OCI-LY7 (cell line): ENCODE measurements at regions of chr2 and their contacts with region 1.

Region 1: GRCh38 chr2:119641562-119642258 is 37.3 kb upstream of the TMEM177 start:
- DNase-seq: peak; percentile 81
- H3K4me3 ChIP-seq: no peak overlapping the region
- H3K27ac ChIP-seq: no peak overlapping the region
- H3K4me1 ChIP-seq: peaks cover 4% of the 10 kb centered on the region
- CTCF ChIP-seq: peak; percentile 96

Region 2: DNA sequence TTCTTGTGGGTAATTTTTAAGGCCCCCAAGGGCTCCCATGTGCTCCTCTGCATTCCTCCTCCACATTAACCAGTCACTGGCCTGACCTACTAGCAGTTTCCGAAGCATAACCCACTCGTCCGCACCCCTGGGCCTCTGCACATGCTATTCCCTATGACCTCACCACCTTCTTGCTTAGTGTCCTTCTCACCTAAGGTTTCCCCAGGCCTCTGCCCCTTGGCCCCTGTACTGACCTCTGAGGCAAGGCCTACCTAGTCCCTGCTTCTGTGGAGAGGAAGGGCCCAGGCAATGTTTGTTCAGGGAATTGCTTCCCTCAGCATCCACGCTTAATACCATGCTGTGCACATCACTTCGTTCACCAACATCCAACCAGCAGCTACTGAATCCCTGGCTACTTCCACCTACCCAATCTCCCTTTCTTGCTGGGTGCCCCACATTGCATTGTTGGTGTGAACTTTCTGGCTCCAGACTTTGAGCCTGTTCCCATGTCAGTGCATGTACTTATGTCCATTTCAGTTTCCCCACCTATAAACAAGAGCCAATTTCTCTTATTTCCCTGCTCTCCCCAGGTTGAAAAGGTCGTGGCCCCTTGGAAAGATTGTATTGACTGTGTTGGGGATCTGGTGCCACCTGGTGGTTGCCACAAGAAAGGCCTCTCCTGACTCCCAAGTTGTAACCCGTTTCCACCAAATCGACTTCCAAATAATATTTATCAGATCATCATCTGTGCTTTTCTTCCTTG is 18.1 kb after region 1 on chr2:
- CTCF ChIA-PET with region 1: interaction called, 3 read pairs
- POLR2A ChIA-PET with region 1: interaction called, 4 read pairs
- intact Hi-C with region 1: loop called (anchors 1 kb)
- DNase-seq: peak; percentile 53
- H3K4me3 ChIP-seq: no peak overlapping the region
- H3K27ac ChIP-seq: no peak overlapping the region
- H3K4me1 ChIP-seq: no peaks in the 10 kb centered on the region
- CTCF ChIP-seq: peak; percentile 95

Region 3: GRCh38 chr2:119678998-119679710 is 37.4 kb after region 1 on chr2 and contains the start of gene TMEM177:
- CTCF ChIA-PET with region 1: interaction called, 12 read pairs
- POLR2A ChIA-PET with region 1: no interaction called
- intact Hi-C with region 1: no loop called
- DNase-seq: peak; percentile 91
- H3K4me3 ChIP-seq: peak within 1 kb of the TSS; percentile 99
- H3K27ac ChIP-seq: peak within 1 kb of the TSS; percentile 43
- H3K4me1 ChIP-seq: peaks cover 8% of the 10 kb centered on the region
- CTCF ChIP-seq: no peak
- total RNA-seq, gene TMEM177: 31.8 and 36.7 TPM in 2 replicates

Region 4: GRCh38 chr2:119694845-119695521 is 53.3 kb after region 1 on chr2:
- CTCF ChIA-PET with region 1: no interaction called
- POLR2A ChIA-PET with region 1: no interaction called
- intact Hi-C with region 1: loop called (anchors 5 kb)
- DNase-seq: no peak
- H3K4me3 ChIP-seq: no peak overlapping the region
- H3K27ac ChIP-seq: no peak overlapping the region
- H3K4me1 ChIP-seq: peaks cover 47% of the 10 kb centered on the region
- CTCF ChIP-seq: no peak

Region 5: DNA sequence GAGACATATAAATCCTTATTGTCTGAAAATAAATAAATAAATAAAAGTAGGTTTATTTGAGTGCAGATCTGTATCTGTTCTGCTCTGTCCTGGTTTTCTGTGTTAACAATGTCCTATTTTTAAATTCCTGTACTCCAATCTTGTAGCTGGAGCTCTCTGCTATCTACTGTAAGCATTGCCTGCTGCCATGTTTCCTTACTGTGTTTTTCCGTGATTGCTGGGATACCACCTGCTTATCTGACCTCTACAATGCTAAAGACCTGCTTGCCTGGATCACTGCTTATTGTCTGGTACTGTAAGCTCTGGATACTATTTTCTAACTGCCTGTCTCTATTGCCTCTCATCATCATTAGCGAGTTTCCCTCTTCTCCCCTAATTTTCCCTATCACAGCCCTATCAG is 129.6 kb after region 1 on chr2:
- CTCF ChIA-PET with region 1: no interaction called
- POLR2A ChIA-PET with region 1: no interaction called
- intact Hi-C with region 1: no loop called
- DNase-seq: no peak
- H3K4me3 ChIP-seq: no peak overlapping the region
- H3K27ac ChIP-seq: no peak overlapping the region
- H3K4me1 ChIP-seq: no peaks in the 10 kb centered on the region
- CTCF ChIP-seq: no peak

Region 6: GRCh38 chr2:119826370-119826961 is 184.8 kb after region 1 on chr2:
- CTCF ChIA-PET with region 1: no interaction called
- POLR2A ChIA-PET with region 1: no interaction called
- intact Hi-C with region 1: loop called (anchors 5 kb)
- DNase-seq: peak; percentile 51
- H3K4me3 ChIP-seq: no peak overlapping the region
- H3K27ac ChIP-seq: no peak overlapping the region
- H3K4me1 ChIP-seq: no peaks in the 10 kb centered on the region
- CTCF ChIP-seq: peak; percentile 85